Right cardiac atrium (tissue), 5 donors: ENCODE measurements at regions of chr9 and their contacts with region 1.

Region 1: DNA sequence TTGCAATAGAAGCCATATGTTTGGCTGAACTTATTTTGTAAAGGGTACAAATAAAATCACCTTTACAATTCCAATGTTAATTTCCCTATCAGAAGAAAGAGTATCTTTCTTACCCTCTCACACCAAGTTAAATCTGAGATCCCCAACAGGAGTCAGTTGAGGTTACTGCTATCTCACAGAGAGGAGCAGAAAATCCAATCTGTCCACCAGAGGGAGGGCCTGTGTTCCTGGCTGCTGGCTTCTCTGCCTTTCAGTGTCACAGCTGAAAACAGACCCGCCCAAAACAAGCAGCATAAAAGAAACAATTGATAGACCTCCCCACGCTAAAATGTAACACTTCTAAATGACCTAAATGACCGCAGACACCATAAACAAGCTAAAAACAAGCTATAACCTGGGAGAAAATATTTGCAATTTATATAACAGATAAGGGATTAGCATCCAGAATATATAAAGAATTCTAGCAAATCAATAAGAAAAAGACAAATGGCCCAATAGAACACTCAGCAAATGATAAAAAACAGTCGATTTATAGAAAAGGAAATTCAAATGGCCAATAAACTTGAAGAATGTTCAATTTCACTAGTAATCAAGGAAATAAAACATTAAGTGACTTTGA is 24.5 kb upstream of the MVB12B start:
- DNase-seq: peak; percentile 40 to 76 (median 72)
- ATAC-seq: peak; percentile 81 to 83
- H3K4me3 ChIP-seq: no peak overlapping the region
- H3K27ac ChIP-seq: no peak overlapping the region
- H3K4me1 ChIP-seq: no peaks in the 10 kb centered on the region
- H3K27me3 ChIP-seq: no peaks in the 10 kb centered on the region

Region 2: GRCh38 chr9:126398403-126399058 is 96.4 kb after region 1 on chr9:
- intact Hi-C with region 1: loop called in 3 of 4 experiments (anchors 2 to 5 kb)
- DNase-seq: peak; percentile 74 to 93 (median 91)
- ATAC-seq: peak; percentile 89 to 91
- H3K4me3 ChIP-seq: no peak overlapping the region
- H3K27ac ChIP-seq: no peak overlapping the region
- H3K4me1 ChIP-seq: no peaks in the 10 kb centered on the region
- H3K27me3 ChIP-seq: no peaks in the 10 kb centered on the region